Mucosa of descending colon (tissue), 3 donors: ENCODE measurements at regions of chr6 and their contacts with region 1.

Region 1: DNA sequence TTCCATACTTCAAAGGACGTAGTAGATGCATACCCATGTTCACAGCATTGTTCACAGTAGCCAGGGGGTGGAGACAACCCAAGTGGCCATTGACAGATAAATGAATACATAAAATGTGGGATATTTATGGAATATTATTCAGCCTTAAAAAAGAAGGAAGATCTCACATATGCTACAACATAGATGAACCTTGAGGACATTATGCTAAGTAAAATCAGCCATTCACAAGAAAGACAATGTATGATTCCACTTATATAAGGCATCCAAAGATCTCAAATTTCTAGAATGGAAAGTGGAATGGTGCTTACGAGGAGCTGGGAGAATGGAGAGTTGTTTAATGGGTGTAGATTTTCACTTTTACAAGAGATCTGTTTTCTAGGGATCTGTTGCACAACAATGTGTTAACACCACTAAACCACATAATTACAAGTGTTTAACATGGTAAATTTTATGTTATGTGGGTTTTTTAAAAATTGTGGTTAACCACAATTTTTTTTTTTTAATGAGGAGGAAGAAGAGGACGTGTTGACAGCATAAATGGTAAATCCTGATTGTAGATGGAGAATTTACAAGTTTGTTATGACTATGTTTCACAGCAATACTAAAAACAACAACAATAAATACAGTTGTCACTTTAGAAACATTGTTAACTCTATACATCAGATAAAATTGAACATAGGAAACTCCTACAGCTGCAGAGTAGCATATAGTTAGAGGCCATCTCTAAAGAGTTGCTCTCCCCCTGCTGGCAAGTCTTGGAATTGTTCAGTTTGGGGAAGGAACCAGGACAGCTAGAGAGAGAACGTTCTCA is 41.6 kb downstream of the CCN2 start:
- DNase-seq: peak in 2 of 3 donors; percentile 49 to 96
- ATAC-seq: peak; percentile 95
- H3K4me3 ChIP-seq: no peak overlapping the region
- H3K4me1 ChIP-seq: peaks cover 24% of the 10 kb centered on the region
- CTCF ChIP-seq: peak; percentile 58

Region 2: GRCh38 chr6:131694831-131695426 is 214.7 kb before region 1 on chr6:
- intact Hi-C with region 1: loop called (anchors 5 to 10 kb)
- DNase-seq: peak in 1 of 3 donors; percentile 66
- ATAC-seq: peak; percentile 85
- H3K4me3 ChIP-seq: no peak overlapping the region
- H3K4me1 ChIP-seq: no peaks in the 10 kb centered on the region
- CTCF ChIP-seq: peak; percentile 64

Region 3: DNA sequence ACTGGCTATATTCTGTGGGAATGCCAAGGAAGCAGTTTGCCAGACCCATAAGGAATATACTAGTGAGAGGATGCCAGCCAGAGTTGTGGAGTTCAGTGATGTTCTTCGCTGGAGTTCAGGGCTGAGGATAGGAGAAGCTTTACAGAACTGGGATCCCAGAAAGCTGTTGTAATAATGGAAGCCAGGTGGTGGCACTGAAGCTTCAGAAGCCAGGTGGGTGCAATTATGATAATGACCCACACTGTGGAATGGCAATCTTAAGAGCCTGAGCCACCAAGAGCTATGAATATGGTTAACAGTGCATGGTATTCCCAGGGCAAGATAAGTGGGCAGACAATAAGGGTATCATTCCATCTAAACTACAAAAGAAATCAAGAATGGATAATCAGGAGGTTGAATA is 126.8 kb before region 1 on chr6:
- intact Hi-C with region 1: loop called in 1 of 2 experiments (anchors 1 kb)
- DNase-seq: peak in 1 of 3 donors; percentile 59
- ATAC-seq: peak; percentile 84
- H3K4me3 ChIP-seq: no peak overlapping the region
- H3K4me1 ChIP-seq: peaks cover 2% of the 10 kb centered on the region
- CTCF ChIP-seq: no peak

Region 4: GRCh38 chr6:132063738-132064137 is 154.1 kb after region 1 on chr6:
- intact Hi-C with region 1: no loop called
- DNase-seq: no peak
- ATAC-seq: peak; percentile 43
- H3K4me3 ChIP-seq: no peak overlapping the region
- H3K4me1 ChIP-seq: no peaks in the 10 kb centered on the region
- CTCF ChIP-seq: no peak